A673 (cell line): ENCODE measurements at regions of chr13 and their contacts with region 1.

Region 1: GRCh38 chr13:100573121-100573520 is 15.5 kb downstream of the GGACT start:
- DNase-seq: peak; percentile 86
- H3K4me3 ChIP-seq: no peak overlapping the region
- H3K27ac ChIP-seq: no peak overlapping the region
- H3K4me1 ChIP-seq: no peaks in the 10 kb centered on the region
- H3K27me3 ChIP-seq: no peaks in the 10 kb centered on the region
- CTCF ChIP-seq: peak; percentile 92

Region 2: DNA sequence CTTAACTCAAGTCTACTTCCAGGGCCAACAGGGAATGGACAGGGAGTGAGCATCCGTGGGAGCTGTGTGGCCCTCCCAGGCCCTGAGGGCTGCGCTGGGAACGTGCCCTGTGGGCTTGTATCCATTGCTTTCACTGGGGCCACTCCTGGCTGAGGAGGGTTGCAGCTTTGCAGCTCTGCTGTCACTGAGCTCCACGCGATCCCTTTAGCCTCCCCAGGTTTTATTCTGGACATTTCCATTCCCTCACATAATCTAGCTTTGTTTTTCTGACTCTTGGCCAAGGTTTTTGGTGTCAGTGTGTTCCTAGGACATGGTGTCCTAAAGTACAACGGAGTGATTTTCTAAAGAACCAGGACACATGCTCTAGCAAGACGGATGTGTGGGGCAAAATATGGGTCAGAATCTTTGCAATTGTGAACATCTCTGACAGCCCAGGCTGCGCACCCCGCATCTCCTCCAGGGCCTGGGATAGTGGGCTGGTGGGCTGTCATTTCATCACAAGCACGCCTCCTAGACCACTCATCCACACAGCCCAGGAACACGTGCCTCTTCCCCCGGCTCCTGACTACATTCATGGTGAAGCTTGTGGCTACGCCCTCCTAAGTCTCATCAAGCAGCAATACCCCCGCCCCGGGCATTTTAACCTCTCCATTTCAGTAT is 12.5 kb before region 1 on chr13:
- CTCF ChIA-PET with region 1: interaction called, 3 read pairs
- POLR2A ChIA-PET with region 1: interaction called, 11 read pairs
- intact Hi-C with region 1: no loop called
- DNase-seq: no peak
- H3K4me3 ChIP-seq: no peak overlapping the region
- H3K27ac ChIP-seq: no peak overlapping the region
- H3K4me1 ChIP-seq: no peaks in the 10 kb centered on the region
- H3K27me3 ChIP-seq: no peaks in the 10 kb centered on the region
- CTCF ChIP-seq: no peak

Region 3: GRCh38 chr13:100633461-100633860 is 60.3 kb after region 1 on chr13:
- CTCF ChIA-PET with region 1: interaction called, 5 read pairs
- POLR2A ChIA-PET with region 1: no interaction called
- intact Hi-C with region 1: loop called (anchors 5 kb)
- DNase-seq: no peak
- H3K4me3 ChIP-seq: no peak overlapping the region
- H3K27ac ChIP-seq: no peak overlapping the region
- H3K4me1 ChIP-seq: peaks cover 9% of the 10 kb centered on the region
- H3K27me3 ChIP-seq: no peaks in the 10 kb centered on the region
- CTCF ChIP-seq: no peak

Region 4: GRCh38 chr13:100721885-100722512 is 148.9 kb after region 1 on chr13:
- CTCF ChIA-PET with region 1: no interaction called
- POLR2A ChIA-PET with region 1: no interaction called
- intact Hi-C with region 1: loop called (anchors 5 kb)
- DNase-seq: peak; percentile 68
- H3K4me3 ChIP-seq: no peak overlapping the region
- H3K27ac ChIP-seq: no peak overlapping the region
- H3K4me1 ChIP-seq: no peaks in the 10 kb centered on the region
- H3K27me3 ChIP-seq: no peaks in the 10 kb centered on the region
- CTCF ChIP-seq: peak; percentile 81

Region 5: GRCh38 chr13:101127741-101128353 is 554.7 kb after region 1 on chr13:
- CTCF ChIA-PET with region 1: interaction called, 8 read pairs
- POLR2A ChIA-PET with region 1: no interaction called
- intact Hi-C with region 1: loop called (anchors 5 kb)
- DNase-seq: peak; percentile 71
- H3K4me3 ChIP-seq: no peak overlapping the region
- H3K27ac ChIP-seq: no peak overlapping the region
- H3K4me1 ChIP-seq: no peaks in the 10 kb centered on the region
- H3K27me3 ChIP-seq: peaks cover 8% of the 10 kb centered on the region
- CTCF ChIP-seq: peak; percentile 86